WTC11 (cell line): ENCODE measurements at regions of chr17 and their contacts with region 1.

Region 1: GRCh38 chr17:80195731-80196529 is 24.2 kb downstream of the SGSH start:
- DNase-seq: peak; percentile 81
- ATAC-seq: peak; percentile 53
- H3K4me3 Mint-ChIP-seq: no peak overlapping the region
- H3K27ac Mint-ChIP-seq: peak overlapping the region; percentile 9; the same call in 1 of the 2 replicates
- H3K4me1 Mint-ChIP-seq: peaks cover 7% of the 10 kb centered on the region
- H3K27me3 Mint-ChIP-seq: no peaks in the 10 kb centered on the region; the same call in 1 of the 2 replicates
- CTCF ChIP-seq: peak; percentile 99

Region 2: DNA sequence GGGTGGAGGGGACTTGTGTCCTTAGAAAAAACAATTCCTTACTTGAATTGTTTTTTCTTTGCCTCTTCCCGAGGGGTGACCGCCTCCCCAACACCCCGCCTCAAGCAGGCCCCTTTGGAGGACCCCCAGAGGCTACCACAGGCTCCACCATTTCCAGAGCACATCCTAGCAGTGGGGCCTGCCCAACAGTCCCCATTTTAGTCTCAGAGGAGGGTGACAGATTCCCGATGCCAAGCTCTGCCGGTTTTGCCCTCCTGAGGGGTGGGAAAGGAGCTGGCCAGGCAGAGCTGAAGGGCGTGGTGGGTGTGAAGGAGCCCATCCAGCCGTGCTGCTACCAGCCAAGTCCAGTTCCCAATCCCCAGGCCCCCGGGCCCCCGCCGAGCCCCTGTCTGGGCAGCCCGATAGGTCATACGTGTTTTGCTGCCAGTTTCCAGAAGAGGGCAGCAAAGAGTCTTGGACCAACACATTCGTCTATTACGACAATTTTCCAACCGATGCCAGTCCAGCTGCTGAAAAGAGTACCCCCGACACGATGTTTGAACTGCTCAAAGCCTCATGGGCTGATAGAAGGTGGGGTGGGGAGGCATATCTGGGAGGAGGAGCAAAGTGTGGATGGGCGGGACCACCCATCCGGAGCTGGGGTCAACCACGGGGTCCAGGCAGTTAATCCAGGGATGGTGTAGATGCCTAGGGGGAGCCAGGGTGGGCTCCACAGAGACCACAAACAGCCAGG is 113.4 kb before region 1 on chr17:
- CTCF ChIA-PET with region 1: interaction called, 12 read pairs
- POLR2A ChIA-PET with region 1: no interaction called
- DNase-seq: peak; percentile 85
- ATAC-seq: peak; percentile 81
- H3K4me3 Mint-ChIP-seq: no peak overlapping the region
- H3K27ac Mint-ChIP-seq: no peak overlapping the region
- H3K4me1 Mint-ChIP-seq: peaks cover 8% of the 10 kb centered on the region; the same call in 1 of the 2 replicates
- H3K27me3 Mint-ChIP-seq: no peaks in the 10 kb centered on the region
- CTCF ChIP-seq: peak; percentile 40; the same call in 1 of the 2 replicates

Region 3: DNA sequence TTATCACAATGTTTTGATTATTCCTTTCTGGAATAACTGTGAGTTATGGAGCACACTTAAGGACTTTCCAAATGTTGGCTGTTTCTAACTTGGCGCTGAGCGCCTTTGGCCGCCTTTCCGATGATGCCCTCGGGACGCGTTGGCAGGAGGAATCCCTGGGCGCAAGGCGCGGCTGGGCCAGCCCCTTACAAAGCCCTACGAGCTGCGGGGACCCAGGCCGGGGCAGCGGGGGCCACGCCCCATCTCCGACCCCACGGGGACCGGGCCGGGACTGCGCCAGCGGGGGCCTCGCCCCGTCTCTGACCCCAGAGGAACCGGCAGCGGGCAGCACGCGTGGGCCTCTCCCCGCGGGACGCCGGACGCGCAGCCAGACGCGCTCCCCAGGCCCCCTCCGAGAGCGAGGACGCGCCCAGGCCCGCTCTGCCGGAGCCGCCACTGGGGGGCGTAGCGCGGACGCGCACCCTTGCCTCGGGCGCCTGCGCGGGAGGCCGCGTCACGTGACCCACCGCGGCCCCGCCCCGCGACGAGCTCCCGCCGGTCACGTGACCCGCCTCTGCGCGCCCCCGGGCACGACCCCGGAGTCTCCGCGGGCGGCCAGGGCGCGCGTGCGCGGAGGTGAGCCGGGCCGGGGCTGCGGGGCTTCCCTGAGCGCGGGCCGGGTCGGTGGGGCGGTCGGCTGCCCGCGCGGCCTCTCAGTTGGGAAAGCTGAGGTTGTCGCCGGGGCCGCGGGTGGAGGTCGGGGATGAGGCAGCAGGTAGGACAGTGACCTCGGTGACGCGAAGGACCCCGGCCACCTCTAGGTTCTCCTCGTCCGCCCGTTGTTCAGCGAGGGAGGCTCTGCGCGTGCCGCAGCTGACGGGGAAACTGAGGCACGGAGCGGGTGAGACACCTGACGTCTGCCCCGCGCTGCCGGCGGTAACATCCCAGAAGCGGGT is 94.7 kb before region 1 on chr17 and contains the start of gene GAA:
- CTCF ChIA-PET with region 1: interaction called, 17 read pairs
- POLR2A ChIA-PET with region 1: no interaction called
- DNase-seq: peak; percentile 82
- ATAC-seq: peak; percentile 76
- H3K4me3 Mint-ChIP-seq: peak within 1 kb of the TSS; percentile 92
- H3K27ac Mint-ChIP-seq: peak within 1 kb of the TSS; percentile 68; the same call in 1 of the 2 replicates
- H3K4me1 Mint-ChIP-seq: peaks cover 17% of the 10 kb centered on the region
- H3K27me3 Mint-ChIP-seq: peaks cover 12% of the 10 kb centered on the region
- CTCF ChIP-seq: peak; percentile 65
- total RNA-seq, gene GAA: 91.6 to 97.7 TPM (median 93.9 TPM) in 3 replicates

Region 4: DNA sequence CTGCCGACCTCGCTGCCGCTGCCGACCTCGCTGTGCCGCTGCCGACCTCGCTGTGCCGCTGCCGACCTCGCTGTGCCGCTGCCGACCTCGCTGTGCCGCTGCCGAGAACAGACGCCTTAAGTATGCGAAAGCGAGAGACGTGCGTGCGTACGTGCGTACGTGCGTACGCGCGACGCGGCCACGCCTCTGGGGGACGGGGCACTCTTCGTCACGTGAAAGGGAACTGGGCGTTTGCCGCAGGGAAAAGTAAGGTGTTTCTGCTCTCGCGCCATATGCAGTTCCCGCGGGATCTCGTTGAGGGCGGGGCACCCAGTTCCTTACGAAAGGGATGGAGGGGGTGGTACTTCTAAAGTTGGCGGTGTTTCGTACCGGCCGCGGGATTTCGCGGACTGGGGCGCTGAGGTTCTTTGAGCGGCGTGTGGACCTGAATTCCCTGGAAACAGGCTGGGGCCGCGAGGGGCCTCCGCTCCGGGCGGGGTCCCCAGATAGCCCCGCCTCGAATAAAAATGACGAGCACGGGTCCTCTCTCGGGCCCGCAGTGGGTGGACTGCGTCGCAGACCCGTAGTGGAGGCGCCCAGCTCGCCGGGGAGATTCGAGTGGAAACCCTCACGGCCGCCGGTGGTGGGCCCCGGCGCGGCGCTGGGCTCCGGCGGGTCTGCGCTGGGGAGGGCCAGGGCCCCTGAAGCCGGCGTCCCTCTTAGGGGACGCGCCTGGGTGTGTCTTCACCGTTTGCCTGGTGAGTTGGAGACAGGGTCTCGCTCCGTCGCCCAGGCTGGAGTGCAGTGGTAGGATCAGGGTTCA is 48.7 kb before region 1 on chr17 and contains the start of gene EIF4A3:
- CTCF ChIA-PET with region 1: interaction called, 11 read pairs
- POLR2A ChIA-PET with region 1: no interaction called
- DNase-seq: peak; percentile 99
- ATAC-seq: peak; percentile 92
- H3K4me3 Mint-ChIP-seq: peak within 1 kb of the TSS; percentile 77
- H3K27ac Mint-ChIP-seq: peak within 1 kb of the TSS; percentile 90
- H3K4me1 Mint-ChIP-seq: peaks cover 29% of the 10 kb centered on the region
- H3K27me3 Mint-ChIP-seq: peaks cover under 1% of the 10 kb centered on the region
- CTCF ChIP-seq: no peak
- total RNA-seq, gene EIF4A3: 142 to 160 TPM (median 142 TPM) in 3 replicates

Region 5: GRCh38 chr17:80183581-80184422 is 12.1 kb before region 1 on chr17:
- CTCF ChIA-PET with region 1: interaction called, 10 read pairs
- POLR2A ChIA-PET with region 1: no interaction called
- DNase-seq: no peak
- ATAC-seq: no peak
- H3K4me3 Mint-ChIP-seq: no peak overlapping the region
- H3K27ac Mint-ChIP-seq: peak overlapping the region; percentile 83; the same call in 1 of the 2 replicates
- H3K4me1 Mint-ChIP-seq: no peaks in the 10 kb centered on the region
- H3K27me3 Mint-ChIP-seq: no peaks in the 10 kb centered on the region
- CTCF ChIP-seq: no peak

Region 6: GRCh38 chr17:80284631-80285030 is 88.7 kb after region 1 on chr17:
- CTCF ChIA-PET with region 1: interaction called, 13 read pairs
- POLR2A ChIA-PET with region 1: no interaction called
- DNase-seq: peak; percentile 65
- ATAC-seq: peak; percentile 76
- H3K4me3 Mint-ChIP-seq: no peak overlapping the region
- H3K27ac Mint-ChIP-seq: peak overlapping the region; percentile 39
- H3K4me1 Mint-ChIP-seq: peaks cover 12% of the 10 kb centered on the region
- H3K27me3 Mint-ChIP-seq: no peaks in the 10 kb centered on the region
- CTCF ChIP-seq: no peak

Region 7: GRCh38 chr17:80364216-80364618 is 168.3 kb after region 1 on chr17:
- CTCF ChIA-PET with region 1: interaction called, 63 read pairs
- POLR2A ChIA-PET with region 1: no interaction called
- DNase-seq: peak; percentile 68
- ATAC-seq: peak; percentile 60
- H3K4me3 Mint-ChIP-seq: no peak overlapping the region
- H3K27ac Mint-ChIP-seq: no peak overlapping the region
- H3K4me1 Mint-ChIP-seq: no peaks in the 10 kb centered on the region
- H3K27me3 Mint-ChIP-seq: no peaks in the 10 kb centered on the region
- CTCF ChIP-seq: peak; percentile 21; the same call in 1 of the 2 replicates